Natural killer cell (primary cell): ENCODE measurements at regions of chr15 and their contacts with region 1.

Region 1: DNA sequence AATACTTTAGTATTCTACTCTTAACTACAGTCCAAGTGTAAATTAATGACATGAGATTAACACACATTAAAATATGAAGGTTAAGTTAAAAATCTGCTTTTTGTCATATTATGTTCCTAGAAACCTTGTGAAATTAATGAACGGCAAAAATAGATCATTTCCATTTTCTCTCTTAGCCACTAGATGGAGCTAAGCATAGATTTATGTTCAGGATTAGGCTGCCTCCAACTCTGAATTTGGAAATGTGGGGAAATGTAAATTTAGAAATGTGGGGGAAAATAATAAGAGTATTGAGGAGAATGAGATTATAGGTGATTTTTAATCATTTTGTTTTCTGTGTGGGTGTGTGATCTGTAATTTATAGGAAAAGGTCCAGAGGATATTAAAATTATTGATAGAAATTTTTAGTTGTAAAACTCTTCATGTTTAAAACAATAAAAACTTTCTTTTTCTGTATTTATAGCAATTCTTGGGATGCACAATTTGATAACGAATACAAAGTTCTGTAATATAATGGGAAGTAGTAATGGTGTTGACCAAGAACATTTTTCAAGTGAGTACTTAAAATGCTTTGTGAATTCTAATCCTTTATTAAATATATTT is 59.2 kb downstream of the TMOD3 start:
- DNase-seq: peak in 1 of 2 donors; percentile 45
- ATAC-seq: peak in 1 of 3 donors; percentile 46
- H3K4me3 ChIP-seq: no peak overlapping the region
- H3K4me3 Mint-ChIP-seq: no peak overlapping the region
- H3K27ac ChIP-seq: no peak overlapping the region
- H3K27ac Mint-ChIP-seq: peak overlapping the region in 1 of 2 donors; percentile 5
- H3K4me1 ChIP-seq: no peaks in the 10 kb centered on the region
- H3K4me1 Mint-ChIP-seq: peaks cover 16 to 23% of the 10 kb centered on the region in 2 donors
- H3K27me3 ChIP-seq: no peaks in the 10 kb centered on the region
- H3K27me3 Mint-ChIP-seq: no peaks in the 10 kb centered on the region
- CTCF ChIP-seq: peak; percentile 90

Region 2: GRCh38 chr15:51576911-51577500 is 311.7 kb before region 1 on chr15:
- intact Hi-C with region 1: no loop called
- DNase-seq: no peak
- ATAC-seq: no peak
- H3K4me3 ChIP-seq: no peak overlapping the region
- H3K4me3 Mint-ChIP-seq: no peak overlapping the region
- H3K27ac ChIP-seq: no peak overlapping the region
- H3K27ac Mint-ChIP-seq: no peak overlapping the region
- H3K4me1 ChIP-seq: no peaks in the 10 kb centered on the region
- H3K4me1 Mint-ChIP-seq: no peaks in the 10 kb centered on the region
- H3K27me3 ChIP-seq: no peaks in the 10 kb centered on the region
- H3K27me3 Mint-ChIP-seq: no peaks in the 10 kb centered on the region
- CTCF ChIP-seq: no peak

Region 3: DNA sequence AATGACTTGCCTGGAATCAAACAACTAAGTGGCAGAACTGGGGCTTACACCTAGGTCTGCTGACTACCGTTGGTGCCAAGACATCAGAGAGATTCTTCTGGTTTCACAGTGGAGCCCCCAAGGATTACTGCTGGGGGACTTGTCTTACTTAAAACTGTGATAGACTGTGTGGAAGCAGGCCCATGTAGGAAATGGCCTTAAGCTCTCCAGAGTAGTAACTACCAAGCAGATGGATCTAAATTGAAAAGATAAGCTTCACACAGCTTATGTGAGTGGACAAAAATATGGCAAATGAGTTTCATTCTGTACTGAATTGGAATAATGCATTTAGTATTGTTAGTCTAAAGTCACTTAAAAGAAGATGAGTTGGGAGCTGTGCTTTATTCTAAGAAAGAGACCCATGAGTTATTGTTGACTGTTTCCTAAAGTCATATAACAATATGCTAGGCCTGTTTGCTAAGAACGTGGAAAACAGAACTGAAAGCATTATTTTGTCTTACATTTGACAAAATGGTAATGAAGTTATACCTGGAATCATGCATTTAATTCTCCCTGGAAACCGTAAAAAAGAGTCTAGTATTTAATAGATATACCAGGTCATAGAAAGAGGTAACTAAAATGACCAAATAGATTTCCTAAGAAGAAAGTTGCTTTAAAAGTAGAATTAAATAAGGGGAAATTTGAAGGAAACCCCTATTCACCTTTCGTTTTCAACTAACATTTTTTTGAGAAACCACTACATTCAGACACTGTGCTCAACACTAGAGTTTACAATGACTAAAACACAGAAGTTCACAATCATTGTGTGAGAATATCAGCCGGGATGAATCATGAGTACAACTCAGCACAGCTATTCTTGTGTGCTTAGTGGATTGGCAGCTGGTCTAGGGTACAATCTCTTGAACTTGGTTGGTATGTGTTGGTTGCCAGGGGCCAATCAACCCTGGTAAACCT is 117.3 kb after region 1 on chr15:
- intact Hi-C with region 1: no loop called
- DNase-seq: peak in 1 of 2 donors; percentile 14
- ATAC-seq: peak in 1 of 3 donors; percentile 41
- H3K4me3 ChIP-seq: no peak overlapping the region
- H3K4me3 Mint-ChIP-seq: no peak overlapping the region
- H3K27ac ChIP-seq: no peak overlapping the region
- H3K27ac Mint-ChIP-seq: no peak overlapping the region
- H3K4me1 ChIP-seq: peaks cover 2% of the 10 kb centered on the region
- H3K4me1 Mint-ChIP-seq: no peaks in the 10 kb centered on the region
- H3K27me3 ChIP-seq: no peaks in the 10 kb centered on the region
- H3K27me3 Mint-ChIP-seq: peaks cover 0 to 3% of the 10 kb centered on the region in 2 donors
- CTCF ChIP-seq: no peak

Region 4: GRCh38 chr15:52227456-52227855 is 338.8 kb after region 1 on chr15:
- intact Hi-C with region 1: loop called (anchors 5 kb)
- DNase-seq: peak; percentile 28 to 88
- ATAC-seq: peak; percentile 92 to 100 (median 99)
- H3K4me3 ChIP-seq: no peak overlapping the region
- H3K4me3 Mint-ChIP-seq: no peak overlapping the region
- H3K27ac ChIP-seq: peak overlapping the region; percentile 24
- H3K27ac Mint-ChIP-seq: no peak overlapping the region
- H3K4me1 ChIP-seq: peaks cover 13% of the 10 kb centered on the region
- H3K4me1 Mint-ChIP-seq: peaks cover 0 to under 1% of the 10 kb centered on the region in 2 donors
- H3K27me3 ChIP-seq: no peaks in the 10 kb centered on the region
- H3K27me3 Mint-ChIP-seq: peaks cover 0 to 4% of the 10 kb centered on the region in 2 donors
- CTCF ChIP-seq: peak; percentile 79

Region 5: GRCh38 chr15:52558196-52558595 is 669.5 kb after region 1 on chr15:
- intact Hi-C with region 1: no loop called
- DNase-seq: peak in 1 of 2 donors; percentile 50
- ATAC-seq: peak; percentile 86 to 98 (median 86)
- H3K4me3 ChIP-seq: no peak overlapping the region
- H3K4me3 Mint-ChIP-seq: no peak overlapping the region
- H3K27ac ChIP-seq: no peak overlapping the region
- H3K27ac Mint-ChIP-seq: peak overlapping the region; percentile 72 to 88
- H3K4me1 ChIP-seq: no peaks in the 10 kb centered on the region
- H3K4me1 Mint-ChIP-seq: peaks cover 54 to 57% of the 10 kb centered on the region in 2 donors
- H3K27me3 ChIP-seq: no peaks in the 10 kb centered on the region
- H3K27me3 Mint-ChIP-seq: no peaks in the 10 kb centered on the region
- CTCF ChIP-seq: no peak